CD8-positive, alpha-beta T cell (primary cell): ENCODE measurements at regions of chr6 and their contacts with region 1.

Region 1: DNA sequence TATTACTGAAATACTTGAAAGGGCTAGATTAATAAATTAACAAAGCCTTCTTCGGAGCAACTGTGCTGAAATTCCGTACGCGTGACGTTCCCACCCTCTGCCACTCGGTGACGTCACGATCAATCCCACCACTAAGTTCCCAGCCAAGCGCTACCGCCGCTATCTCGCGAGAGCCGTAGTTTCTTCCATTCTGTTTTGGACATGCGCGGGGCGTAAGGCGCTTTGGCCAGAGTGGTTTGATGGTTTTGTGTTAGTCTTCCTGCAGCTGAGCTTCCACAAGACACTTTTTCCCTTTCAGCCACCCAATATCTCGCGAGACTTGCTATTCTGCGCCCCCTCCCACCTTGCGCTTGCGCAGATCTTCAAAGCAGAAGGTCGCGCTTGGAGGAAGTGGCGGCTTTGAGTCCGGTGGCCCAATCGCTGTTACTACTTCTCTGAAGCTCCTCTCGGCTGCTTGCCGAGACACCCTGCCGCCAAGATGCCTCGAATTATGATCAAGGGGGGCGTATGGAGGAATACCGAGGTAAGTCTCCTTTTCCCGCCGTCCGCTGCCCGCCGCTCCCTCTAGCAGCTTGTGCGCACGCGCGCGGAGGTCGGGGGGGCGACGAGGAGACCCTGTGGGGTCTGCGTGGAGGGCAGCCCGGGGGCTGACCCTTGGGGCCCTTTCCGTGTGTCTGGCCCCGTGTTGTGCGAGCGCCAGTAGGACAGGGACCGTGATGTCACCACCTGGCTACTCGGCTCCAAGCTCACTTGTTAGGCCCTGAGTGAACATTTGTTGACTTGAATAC is at the start of gene CDC5L:
- DNase-seq: peak; percentile 78 to 99 (median 89)
- ATAC-seq: peak; percentile 83
- H3K4me3 ChIP-seq: peak within 1 kb of the TSS; percentile 67 to 96
- H3K4me3 Mint-ChIP-seq: peak within 1 kb of the TSS; percentile 98
- H3K27ac ChIP-seq: peak within 1 kb of the TSS; percentile 73 to 96
- H3K27ac Mint-ChIP-seq: peak within 1 kb of the TSS; percentile 98
- H3K4me1 ChIP-seq: peaks cover 24% of the 10 kb centered on the region
- H3K4me1 Mint-ChIP-seq: peaks cover 42% of the 10 kb centered on the region
- H3K27me3 ChIP-seq: no peaks in the 10 kb centered on the region
- H3K27me3 Mint-ChIP-seq: no peaks in the 10 kb centered on the region
- CTCF ChIP-seq: no peak
- total RNA-seq, gene CDC5L: 24.1 to 24.4 TPM

Region 2: GRCh38 chr6:44246663-44247337 is 140.7 kb before region 1 on chr6 and contains the start of gene HSP90AB1:
- CTCF ChIA-PET with region 1: no interaction called
- POLR2A ChIA-PET with region 1: interaction called, 5 read pairs
- intact Hi-C with region 1: loop called in 1 of 2 experiments (anchors 1 kb)
- DNase-seq: peak; percentile 89 to 99 (median 94)
- ATAC-seq: peak; percentile 79
- H3K4me3 ChIP-seq: peak within 1 kb of the TSS; percentile 96 to 98
- H3K4me3 Mint-ChIP-seq: peak within 1 kb of the TSS; percentile 99
- H3K27ac ChIP-seq: peak within 1 kb of the TSS; percentile 95 to 96
- H3K27ac Mint-ChIP-seq: peak within 1 kb of the TSS; percentile 98
- H3K4me1 ChIP-seq: peaks cover 26% of the 10 kb centered on the region
- H3K4me1 Mint-ChIP-seq: peaks cover 50% of the 10 kb centered on the region
- H3K27me3 ChIP-seq: no peaks in the 10 kb centered on the region
- H3K27me3 Mint-ChIP-seq: no peaks in the 10 kb centered on the region
- CTCF ChIP-seq: no peak
- total RNA-seq, gene HSP90AB1: 561 to 585 TPM

Region 3: DNA sequence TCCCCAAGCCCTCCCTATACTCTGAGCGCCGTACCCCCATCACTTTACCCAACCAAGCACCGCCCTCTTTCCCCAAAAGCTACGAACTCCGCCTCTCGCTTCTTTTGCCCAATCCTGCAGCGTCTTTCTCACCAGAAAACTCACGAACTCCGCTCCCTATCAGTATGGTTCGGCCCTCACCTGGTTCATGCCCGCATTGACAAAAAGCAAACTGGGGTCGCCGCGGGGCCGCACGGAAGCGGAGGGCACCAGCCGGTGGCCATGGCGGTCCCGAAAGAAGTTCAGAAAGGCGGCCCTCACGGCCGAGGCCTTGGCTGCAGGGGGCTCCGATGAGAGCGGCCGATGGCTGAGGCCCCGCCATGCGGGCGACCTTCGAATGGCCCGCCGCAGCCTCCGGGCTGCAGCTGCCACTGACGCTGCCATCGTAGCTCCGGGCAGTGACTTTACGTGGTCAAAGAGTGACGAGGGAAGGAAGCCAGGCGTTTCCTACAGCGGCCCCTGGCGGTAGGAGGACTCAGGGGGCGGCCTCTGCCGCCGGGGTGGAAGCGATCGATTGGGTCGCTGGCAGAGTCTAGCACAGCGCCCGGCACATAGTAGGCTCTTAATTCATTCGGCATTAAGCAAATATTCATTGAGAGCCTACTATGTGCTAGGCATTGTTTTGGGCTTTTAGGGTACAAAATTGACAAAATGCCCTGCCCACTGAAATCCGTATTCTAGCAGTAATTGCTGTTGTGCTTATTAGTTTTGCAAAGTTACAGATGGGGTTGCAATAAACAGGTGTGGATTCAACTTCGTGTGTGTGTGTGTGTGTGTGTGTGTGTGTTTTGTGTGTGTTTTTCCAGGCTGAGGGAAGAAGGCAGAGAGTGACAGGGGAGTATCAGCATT is 74.4 kb before region 1 on chr6 and contains the start of gene AARS2:
- CTCF ChIA-PET with region 1: no interaction called
- POLR2A ChIA-PET with region 1: no interaction called
- intact Hi-C with region 1: loop called (anchors 1 to 2 kb)
- DNase-seq: peak; percentile 87 to 98 (median 91)
- ATAC-seq: peak; percentile 93
- H3K4me3 ChIP-seq: peak within 1 kb of the TSS; percentile 82 to 92
- H3K4me3 Mint-ChIP-seq: peak within 1 kb of the TSS; percentile 98
- H3K27ac ChIP-seq: peak within 1 kb of the TSS; percentile 66 to 78
- H3K27ac Mint-ChIP-seq: peak within 1 kb of the TSS; percentile 95
- H3K4me1 ChIP-seq: peaks cover 11% of the 10 kb centered on the region
- H3K4me1 Mint-ChIP-seq: peaks cover 13% of the 10 kb centered on the region
- H3K27me3 ChIP-seq: no peaks in the 10 kb centered on the region
- H3K27me3 Mint-ChIP-seq: peaks cover 6% of the 10 kb centered on the region
- CTCF ChIP-seq: peak; percentile 91
- total RNA-seq, gene AARS2: 13.5 to 14.7 TPM